ENCODE measurements at regions of chr16 and their contacts with region 1.

Region 1: DNA sequence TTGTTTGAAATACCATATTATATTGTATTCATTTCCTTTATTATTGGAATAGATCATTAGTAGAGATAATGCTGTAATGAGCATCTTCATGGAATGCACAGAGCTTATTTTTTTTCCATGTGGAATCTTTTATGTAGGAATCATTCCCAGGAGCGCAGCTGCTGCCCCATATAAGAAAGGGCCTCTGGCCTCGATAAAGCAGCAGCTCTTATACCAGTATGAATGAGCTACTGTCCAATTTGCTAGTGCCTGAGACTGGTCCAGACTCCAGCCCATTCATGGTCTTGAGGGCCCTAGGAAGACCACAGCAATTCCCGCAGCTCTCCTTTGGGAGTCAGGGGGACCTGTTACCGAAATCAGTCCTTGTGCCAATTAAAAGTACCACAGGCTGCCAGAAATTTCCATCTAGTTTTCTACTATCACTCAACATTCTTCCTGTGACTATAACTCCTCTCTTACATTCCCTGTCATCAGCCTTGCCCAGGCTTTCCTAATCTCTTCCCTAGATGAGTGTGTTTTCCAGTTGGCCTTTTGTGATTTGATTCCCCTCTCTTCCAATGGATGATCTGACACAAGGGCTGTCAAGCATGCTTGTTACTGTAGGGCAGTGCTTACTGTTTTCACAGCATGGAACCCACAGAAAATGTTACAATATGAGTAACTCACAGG is 1.9 kb downstream of the ZNF843 start:
- DNase-seq: no peak
- H3K4me3 ChIP-seq: no peak overlapping the region
- H3K27ac ChIP-seq: no peak overlapping the region
- H3K4me1 ChIP-seq: peaks cover 23% of the 10 kb centered on the region
- CTCF ChIP-seq: no peak

Region 2: DNA sequence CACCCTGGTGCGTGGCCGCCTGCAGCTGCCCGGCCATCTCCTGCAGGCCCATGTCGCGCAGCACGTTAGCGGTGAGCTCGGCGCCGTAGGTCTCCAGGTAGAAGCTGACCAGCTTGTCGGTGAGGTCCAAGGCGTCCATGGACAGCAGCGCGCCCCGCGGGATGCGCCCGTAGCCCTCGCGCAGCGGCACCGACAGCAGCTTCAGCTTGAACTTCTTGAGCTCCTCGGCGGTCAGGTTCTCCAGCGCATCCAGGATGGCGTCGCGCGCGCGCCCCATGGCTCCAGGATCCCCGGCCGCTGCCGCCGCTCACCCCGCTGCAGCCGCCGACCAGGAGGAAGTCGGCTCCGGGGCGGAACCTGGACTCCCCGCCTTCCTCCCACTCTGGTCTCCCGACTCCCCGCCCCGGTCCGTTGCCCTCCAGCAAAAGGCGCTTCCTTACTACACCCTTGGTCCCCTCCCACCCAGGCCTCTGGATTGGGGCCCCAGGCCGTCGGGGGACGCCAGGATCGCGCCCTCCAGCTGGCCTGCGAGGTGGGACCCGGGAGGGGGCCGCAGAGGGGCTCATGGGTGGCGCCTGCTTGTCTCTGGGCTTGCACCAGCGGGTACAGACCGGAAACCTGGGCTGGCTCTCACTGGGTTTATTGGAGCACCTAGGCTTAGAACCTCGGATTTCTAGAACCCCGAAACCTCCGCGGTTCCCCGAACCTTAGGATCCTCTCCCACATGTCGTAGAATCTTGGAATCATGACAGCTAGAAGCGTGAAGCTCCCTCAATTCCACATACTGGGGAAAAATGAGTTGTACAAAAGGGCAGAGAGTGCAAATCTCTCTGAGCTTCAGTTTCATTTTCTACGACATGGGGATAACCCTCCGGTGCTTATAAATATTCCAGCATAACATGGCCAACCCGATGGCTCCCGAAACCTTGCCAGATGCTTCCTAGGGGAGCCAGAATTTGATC is 238.0 kb before region 1 on chr16 and contains the start of gene PYCARD:
- CTCF ChIA-PET with region 1: no interaction called
- POLR2A ChIA-PET with region 1: no interaction called
- intact Hi-C with region 1: loop called (anchors 1 kb)
- DNase-seq: peak; percentile 37
- H3K4me3 ChIP-seq: peak within 1 kb of the TSS; percentile 69
- H3K27ac ChIP-seq: peak within 1 kb of the TSS; percentile 37
- H3K4me1 ChIP-seq: peaks cover 46% of the 10 kb centered on the region
- CTCF ChIP-seq: no peak
- total RNA-seq, gene PYCARD: 3.7 and 5.5 TPM in 2 replicates

Region 3: DNA sequence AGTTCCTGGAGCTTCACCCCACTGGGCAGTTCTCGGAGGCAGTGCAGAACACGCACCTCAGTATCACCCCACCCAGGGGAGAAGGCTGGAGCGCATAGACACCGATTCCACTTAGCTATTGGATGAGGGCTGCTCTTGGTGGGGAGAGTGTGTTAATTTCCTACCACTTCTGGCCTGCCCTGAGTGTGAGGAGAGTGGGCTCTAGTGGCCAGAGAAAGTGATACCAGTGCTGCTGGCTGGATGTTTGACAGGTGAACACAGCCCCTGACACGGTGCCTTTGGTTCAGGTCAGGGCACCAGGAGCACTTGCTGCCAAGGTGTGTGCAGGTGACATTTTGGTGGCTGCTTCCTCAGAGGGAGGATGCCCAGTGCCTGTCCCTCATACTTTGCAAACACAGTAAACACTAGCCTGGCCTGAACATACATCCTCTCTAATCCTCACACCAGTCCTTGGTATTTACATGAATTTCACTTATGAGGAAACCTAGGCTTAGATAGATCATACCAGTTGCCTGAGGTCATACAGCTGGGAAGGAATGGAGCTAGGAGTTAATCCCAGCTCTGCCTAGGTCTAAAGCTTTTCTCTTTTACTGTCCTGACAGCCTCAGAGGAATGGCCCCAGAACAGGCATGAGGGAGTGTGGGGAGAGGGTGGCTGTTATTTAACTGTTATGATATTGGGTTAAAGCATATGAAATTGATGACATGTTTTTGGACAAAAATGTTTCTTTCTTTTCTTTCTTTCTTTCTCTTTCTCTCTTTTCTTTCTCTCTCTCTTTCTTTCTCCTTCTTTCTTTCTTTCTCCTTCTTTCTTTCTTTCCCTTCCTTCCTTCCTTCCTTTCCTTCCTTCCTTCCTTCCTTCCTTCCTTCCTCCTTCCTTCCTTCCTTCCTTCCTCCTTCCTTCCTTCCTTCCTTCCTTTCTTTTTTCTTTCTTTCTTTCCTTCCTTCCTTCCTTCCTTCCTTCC is 106.7 kb before region 1 on chr16:
- CTCF ChIA-PET with region 1: no interaction called
- POLR2A ChIA-PET with region 1: no interaction called
- intact Hi-C with region 1: loop called (anchors 5 kb)
- DNase-seq: peak; percentile 51
- H3K4me3 ChIP-seq: no peak overlapping the region
- H3K27ac ChIP-seq: no peak overlapping the region
- H3K4me1 ChIP-seq: no peaks in the 10 kb centered on the region
- CTCF ChIP-seq: peak; percentile 64